ENCODE measurements at regions of chr12 and their contacts with region 1.

Region 1: DNA sequence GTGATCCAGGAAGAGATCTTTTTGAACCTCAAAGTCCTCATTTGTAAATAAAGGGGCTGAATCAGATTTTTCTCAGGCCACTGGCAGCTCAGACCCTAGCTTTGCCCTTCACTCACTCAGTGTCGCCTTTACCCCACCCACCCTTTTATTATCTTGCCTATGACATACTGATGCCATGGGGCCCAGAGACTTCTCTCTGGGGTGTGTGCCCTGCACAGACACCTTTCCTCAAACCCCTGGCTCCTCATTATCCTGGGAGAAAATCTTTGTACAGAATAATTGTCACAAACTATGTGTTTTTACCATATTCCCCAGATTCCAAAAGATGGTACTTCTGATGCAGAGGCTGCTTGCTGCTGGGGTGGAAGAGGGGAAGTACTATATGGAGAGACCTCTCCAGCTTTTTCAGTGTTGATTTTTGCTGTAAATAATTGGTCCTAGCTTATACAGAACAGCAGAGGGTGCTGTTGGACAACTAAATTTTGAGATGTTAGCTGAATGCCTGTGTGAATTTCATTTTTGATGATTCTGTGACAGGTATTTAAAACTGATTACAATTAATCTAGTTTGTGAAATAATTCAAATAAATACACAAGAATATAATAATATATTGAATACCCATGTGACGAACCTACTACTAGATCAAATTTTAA is 53.9 kb upstream of the DCD start:
- DNase-seq: peak in 3 of 9 experiments; percentile 33 to 77 (median 69)
- ATAC-seq: peak; percentile 54
- H3K4me3 ChIP-seq: no peak overlapping the region
- H3K4me3 Mint-ChIP-seq: no peak overlapping the region
- H3K27ac ChIP-seq: no peak overlapping the region
- H3K27ac Mint-ChIP-seq: no peak overlapping the region
- H3K4me1 ChIP-seq: no peaks in the 10 kb centered on the region
- H3K4me1 Mint-ChIP-seq: no peaks in the 10 kb centered on the region
- H3K27me3 ChIP-seq: no peaks in the 10 kb centered on the region
- H3K27me3 Mint-ChIP-seq: peaks cover 5% of the 10 kb centered on the region
- CTCF ChIP-seq: peak; percentile 84

Region 2: DNA sequence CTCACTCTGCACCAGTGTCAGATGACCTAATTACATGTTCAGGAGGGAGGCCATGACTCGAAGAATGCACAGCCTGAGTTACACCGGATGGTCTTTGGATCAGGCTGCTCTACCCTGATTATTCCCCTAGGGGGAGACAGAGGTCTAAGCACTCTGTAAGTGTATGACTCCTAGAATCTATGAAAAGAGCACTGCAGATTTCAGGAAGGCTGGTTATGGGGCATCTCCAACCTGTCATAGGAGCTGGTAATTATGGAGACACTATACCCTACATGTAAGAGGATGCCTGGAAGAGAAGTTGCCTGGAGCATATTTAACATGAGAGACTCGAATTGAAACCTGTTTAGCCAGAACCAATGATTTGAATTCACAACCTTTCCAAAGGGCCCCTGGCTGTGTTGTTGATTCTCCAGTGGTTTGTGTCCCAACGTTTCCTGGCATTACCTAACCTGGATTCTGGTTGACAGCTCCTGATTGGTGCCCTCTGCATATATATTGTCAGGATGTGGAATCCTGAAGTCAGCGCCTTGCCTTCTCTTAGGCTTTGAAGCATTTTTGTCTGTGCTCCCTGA is 152.0 kb after region 1 on chr12 and contains the start of gene MUCL1:
- CTCF ChIA-PET with region 1: interaction called, 4 read pairs
- POLR2A ChIA-PET with region 1: no interaction called
- intact Hi-C with region 1: loop called (anchors 1 to 2 kb)
- DNase-seq: peak; percentile 52 to 83 (median 72)
- ATAC-seq: peak; percentile 100
- H3K4me3 ChIP-seq: no peak within 1 kb of the TSS
- H3K4me3 Mint-ChIP-seq: no peak within 1 kb of the TSS
- H3K27ac ChIP-seq: no peak within 1 kb of the TSS
- H3K27ac Mint-ChIP-seq: no peak within 1 kb of the TSS
- H3K4me1 ChIP-seq: no peaks in the 10 kb centered on the region
- H3K4me1 Mint-ChIP-seq: peaks cover 4% of the 10 kb centered on the region
- H3K27me3 ChIP-seq: no peaks in the 10 kb centered on the region
- H3K27me3 Mint-ChIP-seq: peaks cover 2% of the 10 kb centered on the region
- CTCF ChIP-seq: peak; percentile 93
- total RNA-seq, gene MUCL1: not detected

Region 3: DNA sequence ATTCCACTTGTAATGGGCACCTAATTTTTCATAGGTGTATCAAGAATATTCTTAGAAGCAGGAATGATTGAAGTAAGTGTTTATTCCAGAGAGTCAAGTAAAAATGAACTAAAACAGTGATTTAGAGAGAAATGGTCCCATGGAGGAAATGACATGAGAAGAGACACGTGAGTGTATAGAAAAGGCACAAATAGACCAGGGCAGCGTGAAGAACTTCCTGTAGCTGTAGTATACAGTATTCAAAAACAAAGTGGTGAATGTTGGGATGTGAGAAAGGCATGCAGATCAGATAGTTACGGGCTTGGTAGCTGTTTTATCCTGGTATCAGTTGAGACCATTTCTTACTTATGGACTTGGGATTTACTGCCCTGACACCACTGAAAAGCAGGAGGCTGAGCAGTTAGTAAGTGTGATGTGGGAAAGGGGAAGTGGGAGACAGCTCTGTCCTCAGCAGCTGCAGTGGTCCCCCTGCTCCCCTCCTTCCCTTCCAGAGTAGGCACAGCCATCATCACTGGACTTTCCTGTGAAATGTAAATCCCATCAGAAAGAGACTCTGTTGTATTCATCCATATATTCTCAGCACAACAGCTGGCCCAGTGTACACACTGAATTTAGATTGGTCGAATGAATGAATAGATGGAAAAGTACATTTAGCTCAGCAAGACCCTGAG is 299.3 kb after region 1 on chr12:
- CTCF ChIA-PET with region 1: interaction called, 14 read pairs
- POLR2A ChIA-PET with region 1: no interaction called
- intact Hi-C with region 1: no loop called
- DNase-seq: no peak
- ATAC-seq: no peak
- H3K4me3 ChIP-seq: no peak overlapping the region
- H3K4me3 Mint-ChIP-seq: peak overlapping the region; percentile 23
- H3K27ac ChIP-seq: no peak overlapping the region
- H3K27ac Mint-ChIP-seq: peak overlapping the region; percentile 74
- H3K4me1 ChIP-seq: peaks cover 14% of the 10 kb centered on the region
- H3K4me1 Mint-ChIP-seq: peaks cover 18% of the 10 kb centered on the region
- H3K27me3 ChIP-seq: no peaks in the 10 kb centered on the region
- H3K27me3 Mint-ChIP-seq: no peaks in the 10 kb centered on the region
- CTCF ChIP-seq: no peak

Region 4: DNA sequence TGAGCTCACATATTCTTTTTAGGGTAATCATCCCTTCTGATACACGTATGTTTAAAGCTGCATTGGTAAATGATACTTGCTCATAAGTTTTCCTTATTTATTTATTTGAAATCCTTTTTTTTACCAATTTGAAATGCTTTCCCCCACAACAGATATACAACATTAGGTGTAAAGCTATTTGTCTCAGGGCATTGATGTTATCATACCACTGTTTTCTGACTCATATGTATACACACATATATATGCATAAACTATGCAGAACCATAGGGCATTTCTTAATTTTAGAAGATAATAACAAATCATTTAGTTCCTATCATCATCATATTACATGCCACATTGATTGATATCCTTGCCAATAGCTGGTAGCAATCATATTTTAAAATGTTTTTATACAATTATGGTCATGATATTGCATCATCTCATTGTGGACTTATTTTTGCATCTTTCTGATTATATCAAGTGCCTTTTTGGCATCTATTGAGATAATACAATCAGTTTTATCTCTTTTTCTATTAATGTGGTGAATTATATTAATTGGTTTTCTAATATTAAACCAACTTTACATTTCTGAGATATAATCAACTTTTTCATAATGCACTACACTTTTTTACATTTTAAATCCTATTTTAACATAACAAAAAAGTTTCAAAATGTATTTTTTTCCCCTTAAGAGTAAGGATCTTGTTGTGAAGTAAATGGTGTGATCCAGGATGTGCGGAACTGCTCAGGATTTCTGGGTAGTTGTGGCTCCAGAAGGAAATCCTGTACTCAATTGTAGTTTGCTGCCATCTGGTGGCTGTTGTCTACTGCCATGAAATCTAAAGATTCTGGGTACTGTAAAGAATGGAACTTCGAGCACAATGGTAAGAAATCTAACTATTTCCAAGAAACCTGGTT is 440.9 kb after region 1 on chr12:
- CTCF ChIA-PET with region 1: interaction called, 5 read pairs
- POLR2A ChIA-PET with region 1: no interaction called
- intact Hi-C with region 1: loop called (anchors 1 to 2 kb)
- DNase-seq: peak; percentile 6 to 65 (median 42)
- ATAC-seq: no peak
- H3K4me3 ChIP-seq: no peak overlapping the region
- H3K4me3 Mint-ChIP-seq: no peak overlapping the region
- H3K27ac ChIP-seq: no peak overlapping the region
- H3K27ac Mint-ChIP-seq: no peak overlapping the region
- H3K4me1 ChIP-seq: peaks cover 3% of the 10 kb centered on the region
- H3K4me1 Mint-ChIP-seq: peaks cover 5% of the 10 kb centered on the region
- H3K27me3 ChIP-seq: no peaks in the 10 kb centered on the region
- H3K27me3 Mint-ChIP-seq: peaks cover 5% of the 10 kb centered on the region
- CTCF ChIP-seq: peak; percentile 81

Region 5: GRCh38 chr12:55619354-55620138 is 917.5 kb after region 1 on chr12:
- CTCF ChIA-PET with region 1: no interaction called
- POLR2A ChIA-PET with region 1: no interaction called
- intact Hi-C with region 1: loop called in 1 of 2 experiments (anchors 2 kb)
- DNase-seq: peak in 6 of 9 experiments; percentile 4 to 83 (median 42)
- ATAC-seq: peak; percentile 96
- H3K4me3 ChIP-seq: no peak overlapping the region
- H3K4me3 Mint-ChIP-seq: no peak overlapping the region
- H3K27ac ChIP-seq: no peak overlapping the region
- H3K27ac Mint-ChIP-seq: no peak overlapping the region
- H3K4me1 ChIP-seq: no peaks in the 10 kb centered on the region
- H3K4me1 Mint-ChIP-seq: peaks cover 2% of the 10 kb centered on the region
- H3K27me3 ChIP-seq: no peaks in the 10 kb centered on the region
- H3K27me3 Mint-ChIP-seq: peaks cover 22% of the 10 kb centered on the region
- CTCF ChIP-seq: peak; percentile 86

Measured in CD8-positive, alpha-beta T cell (primary cell).